BJ (cell line): ENCODE measurements at regions of chr19 and their contacts with region 1.

Region 1: DNA sequence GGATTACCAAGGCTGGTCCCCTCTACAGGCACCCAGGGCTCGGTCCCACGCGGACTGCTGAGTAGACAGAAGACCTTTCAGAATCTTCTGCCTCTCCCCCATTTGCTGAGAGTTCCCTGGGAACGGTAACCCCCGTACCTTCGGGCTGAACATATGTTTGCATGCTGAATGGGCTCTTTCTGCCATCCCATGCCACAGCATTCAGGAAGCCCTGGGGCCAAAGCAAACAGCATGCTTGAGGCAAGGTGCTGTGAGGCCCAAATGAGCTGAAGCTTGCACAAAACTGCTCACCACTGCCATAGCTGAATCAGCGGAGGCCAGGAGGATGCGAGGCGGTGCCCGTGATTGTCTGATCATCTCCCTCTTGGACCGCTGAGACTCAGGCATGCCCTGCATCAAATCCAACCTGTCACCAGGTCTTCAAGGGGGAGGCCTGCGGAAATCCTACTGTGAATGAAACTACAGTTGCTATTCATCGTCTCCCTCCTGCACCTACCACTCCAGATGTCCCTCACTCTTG is 16.3 kb upstream of the C19orf12 start:
- DNase-seq: no peak
- H3K4me3 ChIP-seq: no peak overlapping the region
- H3K27me3 ChIP-seq: peaks cover 4% of the 10 kb centered on the region
- CTCF ChIP-seq: no peak

Region 2: DNA sequence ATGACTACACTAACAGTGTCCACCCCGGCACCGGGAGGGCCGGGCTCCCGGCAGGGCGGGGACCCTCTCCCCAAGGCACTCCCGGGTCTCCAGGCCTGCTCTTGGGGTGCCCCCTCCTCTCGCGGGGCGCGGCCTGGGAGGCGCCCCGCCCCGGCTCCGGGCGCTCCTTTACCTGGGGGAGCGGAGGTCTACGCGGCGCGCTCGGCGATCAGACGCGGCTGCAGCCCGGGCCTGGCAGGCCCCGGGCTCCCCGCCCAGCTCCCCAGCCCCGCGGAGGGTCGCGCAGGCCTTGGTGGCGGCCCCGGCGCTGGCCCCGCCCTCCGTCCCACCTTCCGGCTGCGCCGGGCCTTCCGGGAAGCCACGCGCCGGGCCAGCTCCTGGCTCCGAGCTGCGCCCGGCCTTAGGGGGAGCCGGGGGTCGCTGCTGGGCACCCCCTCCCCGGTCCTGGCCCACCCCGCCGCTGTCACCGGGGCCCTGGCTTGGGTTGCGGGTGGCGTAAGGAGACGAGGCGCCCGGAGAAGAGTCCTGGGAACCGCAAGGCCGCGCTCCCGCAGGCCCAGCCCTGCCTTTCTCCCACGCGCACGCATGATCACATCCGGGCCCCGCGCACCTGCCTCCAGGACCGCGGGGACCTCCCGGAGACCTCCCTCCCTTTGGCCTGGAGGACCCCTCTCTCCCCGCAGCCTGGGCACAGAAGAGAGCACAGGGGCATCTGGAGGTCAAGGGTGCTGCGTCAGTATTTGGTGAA is 16.3 kb before region 1 on chr19 and contains the start of gene C19orf12:
- CTCF ChIA-PET with region 1: interaction called, 16 read pairs
- POLR2A ChIA-PET with region 1: no interaction called
- DNase-seq: no peak
- H3K4me3 ChIP-seq: peak within 1 kb of the TSS; percentile 89
- H3K27me3 ChIP-seq: no peaks in the 10 kb centered on the region
- CTCF ChIP-seq: no peak
- polyA plus RNA-seq, gene C19orf12: 21.8 and 33.9 TPM in 2 replicates

Region 3: DNA sequence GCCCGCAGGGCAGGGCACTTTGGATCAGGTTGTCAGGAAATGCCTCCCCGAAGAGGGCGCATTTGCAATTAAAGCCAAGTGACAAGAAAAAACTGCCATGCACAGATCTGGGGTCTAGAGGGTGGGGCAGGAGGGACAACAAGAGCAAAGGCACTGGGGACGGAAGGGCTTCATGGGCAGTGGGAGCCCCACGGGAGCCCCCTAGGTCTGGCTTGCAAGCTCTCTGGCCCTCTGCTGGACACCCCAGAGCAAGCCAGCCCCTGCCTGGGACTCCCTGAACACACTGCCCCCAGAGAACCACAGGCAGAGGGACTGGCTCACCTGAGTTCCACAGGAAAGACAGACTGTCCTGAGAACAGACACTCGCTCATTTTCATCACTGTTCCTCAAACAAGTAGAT is 13.9 kb after region 1 on chr19:
- CTCF ChIA-PET with region 1: interaction called, 10 read pairs
- POLR2A ChIA-PET with region 1: no interaction called
- DNase-seq: no peak
- H3K4me3 ChIP-seq: no peak overlapping the region
- H3K27me3 ChIP-seq: no peaks in the 10 kb centered on the region
- CTCF ChIP-seq: peak; percentile 13; the same call in 1 of the 2 replicates